ENCODE measurements at regions of chr5 and their contacts with region 1.

Region 1: GRCh38 chr5:63125862-63126261 is 547.2 kb downstream of the LRRC70 start:
- DNase-seq: peak; percentile 56
- ATAC-seq: peak; percentile 37; the same call in 1 of the 2 replicates
- H3K4me3 ChIP-seq: no peak overlapping the region
- H3K27ac ChIP-seq: no peak overlapping the region
- H3K4me1 ChIP-seq: peaks cover 37% of the 10 kb centered on the region
- H3K27me3 ChIP-seq: no peaks in the 10 kb centered on the region
- CTCF ChIP-seq: peak; percentile 72

Region 2: DNA sequence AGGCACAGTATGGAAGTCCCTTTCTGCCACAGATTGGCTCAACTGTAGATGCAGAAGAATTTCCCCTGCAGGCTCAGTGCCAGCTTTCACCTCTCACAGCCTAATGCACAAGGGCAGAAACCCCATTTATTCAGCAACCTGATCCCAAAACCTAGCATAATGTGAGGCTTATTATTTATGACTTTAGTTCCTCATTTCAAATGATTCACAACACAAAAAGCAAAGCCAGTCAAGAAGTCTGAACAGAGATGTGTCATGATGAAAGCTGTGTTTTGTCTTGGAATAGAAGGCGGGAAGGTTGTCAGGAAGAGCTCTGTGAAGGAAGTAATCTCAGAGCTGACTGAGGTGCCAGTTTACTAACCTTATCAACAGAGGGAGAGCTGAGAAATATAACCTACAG is 177.6 kb before region 1 on chr5:
- CTCF ChIA-PET with region 1: no interaction called
- POLR2A ChIA-PET with region 1: interaction called, 3 read pairs
- intact Hi-C with region 1: loop called (anchors 10 kb)
- DNase-seq: no peak
- ATAC-seq: no peak; the same call in none of the 2 replicates
- H3K4me3 ChIP-seq: no peak overlapping the region
- H3K27ac ChIP-seq: no peak overlapping the region
- H3K4me1 ChIP-seq: no peaks in the 10 kb centered on the region
- H3K27me3 ChIP-seq: no peaks in the 10 kb centered on the region
- CTCF ChIP-seq: no peak

Region 3: GRCh38 chr5:63154476-63155303 is 28.8 kb after region 1 on chr5:
- CTCF ChIA-PET with region 1: interaction called, 4 read pairs
- POLR2A ChIA-PET with region 1: no interaction called
- intact Hi-C with region 1: loop called (anchors 2 kb)
- DNase-seq: no peak
- ATAC-seq: no peak
- H3K4me3 ChIP-seq: no peak overlapping the region
- H3K27ac ChIP-seq: no peak overlapping the region
- H3K4me1 ChIP-seq: peaks cover 12% of the 10 kb centered on the region; the same call in 1 of the 2 replicates
- H3K27me3 ChIP-seq: no peaks in the 10 kb centered on the region
- CTCF ChIP-seq: no peak

Region 4: DNA sequence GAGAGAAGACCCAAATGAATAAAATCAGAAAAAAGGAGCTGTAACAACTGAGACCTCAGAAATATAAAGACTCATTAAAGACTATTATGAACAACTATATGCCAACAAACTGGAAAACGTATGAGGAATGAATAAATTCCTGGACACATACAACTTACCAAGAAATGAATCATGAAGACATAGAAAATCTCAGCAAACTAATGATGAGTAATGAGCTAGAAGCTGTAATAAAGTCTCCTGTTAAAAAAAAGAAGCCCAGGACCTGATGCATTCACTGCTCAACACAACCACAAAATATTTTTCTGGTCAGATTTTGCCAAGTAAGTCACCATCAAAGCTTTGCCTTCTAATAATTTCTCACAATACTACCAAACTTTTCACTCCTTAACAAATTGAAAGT is 119.4 kb after region 1 on chr5:
- CTCF ChIA-PET with region 1: no interaction called
- POLR2A ChIA-PET with region 1: no interaction called
- intact Hi-C with region 1: loop called (anchors 5 kb)
- DNase-seq: peak; percentile 60
- ATAC-seq: peak; percentile 65
- H3K4me3 ChIP-seq: no peak overlapping the region
- H3K27ac ChIP-seq: 0 out of 2 replicates have a peak overlapping the region, but pooled peaks have one; percentile 23
- H3K4me1 ChIP-seq: peaks cover 15% of the 10 kb centered on the region; the same call in 1 of the 2 replicates
- H3K27me3 ChIP-seq: no peaks in the 10 kb centered on the region
- CTCF ChIP-seq: no peak

Region 5: GRCh38 chr5:63262185-63262981 is 136.5 kb after region 1 on chr5:
- CTCF ChIA-PET with region 1: no interaction called
- POLR2A ChIA-PET with region 1: no interaction called
- intact Hi-C with region 1: loop called (anchors 1 kb)
- DNase-seq: peak; percentile 64
- ATAC-seq: peak; percentile 80
- H3K4me3 ChIP-seq: no peak overlapping the region
- H3K27ac ChIP-seq: no peak overlapping the region; the same call in 1 of the 2 replicates
- H3K4me1 ChIP-seq: peaks cover 4% of the 10 kb centered on the region; the same call in 1 of the 2 replicates
- H3K27me3 ChIP-seq: no peaks in the 10 kb centered on the region
- CTCF ChIP-seq: no peak

Region 6: DNA sequence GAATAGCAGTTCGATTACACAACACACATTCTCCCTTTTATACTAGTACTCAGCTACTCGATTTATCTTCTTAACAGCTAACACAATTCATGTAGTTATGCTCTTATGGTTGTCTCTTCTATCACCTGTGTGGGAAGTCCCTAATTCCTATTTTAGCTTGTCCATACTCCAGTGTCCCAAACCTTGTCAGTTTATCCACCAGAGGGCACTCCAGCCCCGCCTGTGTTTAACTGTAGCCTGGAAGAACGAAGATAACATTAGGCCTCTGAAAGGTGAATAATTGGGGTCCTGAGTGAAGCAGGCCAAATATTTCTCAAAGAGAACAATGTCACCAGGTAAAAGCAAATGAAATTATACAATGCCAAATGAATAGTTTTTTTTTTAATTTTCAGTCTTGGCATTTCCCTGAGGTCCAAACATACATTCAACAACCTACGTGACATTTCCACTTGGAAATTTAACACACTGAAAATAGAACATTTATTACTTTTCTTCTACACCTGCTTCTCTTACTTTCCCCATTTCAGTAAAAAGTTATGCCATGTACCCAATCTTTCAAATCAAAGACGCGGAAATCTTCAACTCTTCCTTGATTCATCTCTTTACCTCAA is 275.7 kb after region 1 on chr5:
- CTCF ChIA-PET with region 1: no interaction called
- POLR2A ChIA-PET with region 1: no interaction called
- intact Hi-C with region 1: loop called (anchors 1 kb)
- DNase-seq: peak; percentile 75
- ATAC-seq: peak; percentile 89
- H3K4me3 ChIP-seq: no peak overlapping the region
- H3K27ac ChIP-seq: no peak overlapping the region
- H3K4me1 ChIP-seq: no peaks in the 10 kb centered on the region
- H3K27me3 ChIP-seq: no peaks in the 10 kb centered on the region
- CTCF ChIP-seq: peak; percentile 92

Region 7: DNA sequence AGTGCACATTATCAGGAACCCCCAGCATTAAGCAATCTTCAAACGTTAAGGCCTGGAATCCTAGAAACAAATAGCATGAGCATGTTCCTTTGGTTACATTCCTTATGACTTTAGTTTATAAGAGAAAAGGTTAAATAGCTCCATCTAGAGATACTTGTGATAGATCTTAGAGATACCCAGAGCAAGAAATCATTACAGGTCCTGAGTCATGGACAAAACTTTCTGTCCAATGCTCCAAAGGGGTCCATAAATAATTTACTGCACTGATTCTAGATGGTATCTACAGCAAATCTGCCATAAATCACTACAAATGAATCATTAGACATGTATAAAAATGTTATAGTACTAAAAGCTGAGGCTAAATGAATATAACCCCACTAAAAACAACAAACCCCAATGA is 696.8 kb after region 1 on chr5:
- CTCF ChIA-PET with region 1: no interaction called
- POLR2A ChIA-PET with region 1: no interaction called
- intact Hi-C with region 1: loop called (anchors 1 kb)
- DNase-seq: peak; percentile 28
- ATAC-seq: peak; percentile 92
- H3K4me3 ChIP-seq: no peak overlapping the region
- H3K27ac ChIP-seq: no peak overlapping the region
- H3K4me1 ChIP-seq: no peaks in the 10 kb centered on the region
- H3K27me3 ChIP-seq: no peaks in the 10 kb centered on the region
- CTCF ChIP-seq: 0 out of 2 replicates have a peak, but pooled peaks have one; percentile 31